SK-N-SH (cell line): ENCODE measurements at regions of chr2 and their contacts with region 1.

Region 1: DNA sequence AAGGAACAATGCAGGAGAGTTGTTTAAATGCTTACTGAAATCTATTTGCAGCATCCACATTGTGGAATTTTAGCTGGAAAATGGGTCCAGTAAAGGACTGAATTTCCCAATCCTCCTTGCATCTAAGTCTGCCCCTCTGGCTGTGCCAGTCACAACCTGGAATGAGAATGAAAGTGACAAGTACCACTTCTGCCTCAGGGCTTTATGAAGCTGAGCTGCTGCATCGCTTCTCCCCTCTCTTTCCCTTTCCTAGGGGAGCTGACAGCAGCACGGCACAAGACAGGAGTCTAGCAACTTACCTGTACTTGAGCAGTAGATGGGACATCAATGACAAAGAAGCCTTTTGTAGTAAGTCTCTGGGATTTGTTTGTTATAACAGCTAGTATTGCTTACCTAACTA is 27.3 kb upstream of the THSD7B start:
- DNase-seq: no peak
- H3K4me3 ChIP-seq: no peak overlapping the region
- H3K27ac ChIP-seq: no peak overlapping the region
- H3K4me1 ChIP-seq: no peaks in the 10 kb centered on the region
- H3K27me3 ChIP-seq: no peaks in the 10 kb centered on the region
- CTCF ChIP-seq: no peak
- EP300 ChIP-seq: no peak
- RAD21 ChIP-seq: no peak

Region 2: GRCh38 chr2:136920652-136921333 is 182.7 kb after region 1 on chr2:
- CTCF ChIA-PET with region 1: interaction called, 11 read pairs
- POLR2A ChIA-PET with region 1: no interaction called
- DNase-seq: peak; percentile 76
- H3K4me3 ChIP-seq: no peak overlapping the region
- H3K27ac ChIP-seq: no peak overlapping the region
- H3K4me1 ChIP-seq: peaks cover 0 to 3% of the 10 kb centered on the region in 2 experiments; a peak in 1 of 4 replicates
- H3K27me3 ChIP-seq: no peaks in the 10 kb centered on the region
- CTCF ChIP-seq: no peak
- EP300 ChIP-seq: no peak
- RAD21 ChIP-seq: peak; percentile 81

Region 3: GRCh38 chr2:137023205-137023604 is 285.2 kb after region 1 on chr2:
- CTCF ChIA-PET with region 1: no interaction called
- POLR2A ChIA-PET with region 1: no interaction called
- DNase-seq: no peak
- H3K4me3 ChIP-seq: no peak overlapping the region
- H3K27ac ChIP-seq: no peak overlapping the region
- H3K4me1 ChIP-seq: peaks cover 0 to 7% of the 10 kb centered on the region in 2 experiments; a peak in 1 of 4 replicates
- H3K27me3 ChIP-seq: no peaks in the 10 kb centered on the region
- CTCF ChIP-seq: no peak
- EP300 ChIP-seq: no peak
- RAD21 ChIP-seq: no peak